GM13976 (cell line): ENCODE measurements at regions of chr9 and their contacts with region 1.

Region 1: DNA sequence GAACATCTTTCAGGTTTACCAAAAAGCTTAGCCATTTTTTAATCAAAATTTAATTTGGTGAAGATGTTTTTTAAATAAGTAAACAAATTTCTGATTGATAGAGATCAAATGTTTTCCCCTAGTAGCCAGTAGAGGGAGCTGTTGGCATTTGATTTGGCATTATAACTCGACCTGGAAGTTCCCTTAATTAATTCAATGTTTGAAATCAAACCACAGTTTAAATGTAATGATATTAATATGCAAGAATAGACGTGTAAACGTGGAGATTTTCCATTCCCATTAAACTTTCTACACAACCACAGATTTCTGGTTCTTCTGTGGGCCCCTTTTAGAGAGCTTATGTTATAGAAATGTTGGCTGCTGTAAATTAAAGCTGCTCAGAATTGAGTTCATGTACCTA is 148.1 kb upstream of the MPDZ start:
- DNase-seq: peak; percentile 44
- CTCF ChIP-seq: peak; percentile 44

Region 2: GRCh38 chr9:13318027-13318426 is 109.6 kb before region 1 on chr9:
- in situ Hi-C with region 1: no loop called
- DNase-seq: no peak
- CTCF ChIP-seq: no peak

Region 3: GRCh38 chr9:13971966-13972655 is 544.5 kb after region 1 on chr9:
- in situ Hi-C with region 1: no loop called
- DNase-seq: no peak
- CTCF ChIP-seq: no peak

Region 4: GRCh38 chr9:14353222-14354056 is 925.9 kb after region 1 on chr9:
- in situ Hi-C with region 1: loop called (anchors 10 kb)
- DNase-seq: peak; percentile 80
- CTCF ChIP-seq: peak; percentile 94

Region 5: DNA sequence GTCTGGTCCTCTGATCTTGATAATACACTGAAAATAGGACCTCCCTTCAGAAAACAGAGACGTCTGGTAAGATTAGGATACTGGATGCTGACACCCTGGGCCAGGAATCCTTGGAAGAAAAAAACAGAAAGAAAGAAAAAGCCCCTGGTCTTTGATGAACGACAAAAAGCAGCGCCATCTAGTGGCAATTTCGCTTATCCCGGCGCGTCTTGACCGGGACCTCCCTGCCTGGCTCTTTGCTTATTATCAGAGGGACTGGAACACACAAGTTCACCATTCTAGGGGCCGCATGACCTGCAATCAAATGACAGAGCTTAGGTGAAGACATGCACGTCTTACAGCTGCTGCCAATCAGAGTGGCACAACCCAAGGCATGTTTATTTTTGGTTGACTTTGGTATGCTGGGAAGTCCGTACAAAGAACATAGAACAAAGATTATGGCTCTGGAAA is 1001.2 kb after region 1 on chr9:
- in situ Hi-C with region 1: loop called (anchors 25 kb)
- DNase-seq: peak; percentile 44
- CTCF ChIP-seq: peak; percentile 81